ENCODE measurements at regions of chr1 and their contacts with region 1.

Region 1: DNA sequence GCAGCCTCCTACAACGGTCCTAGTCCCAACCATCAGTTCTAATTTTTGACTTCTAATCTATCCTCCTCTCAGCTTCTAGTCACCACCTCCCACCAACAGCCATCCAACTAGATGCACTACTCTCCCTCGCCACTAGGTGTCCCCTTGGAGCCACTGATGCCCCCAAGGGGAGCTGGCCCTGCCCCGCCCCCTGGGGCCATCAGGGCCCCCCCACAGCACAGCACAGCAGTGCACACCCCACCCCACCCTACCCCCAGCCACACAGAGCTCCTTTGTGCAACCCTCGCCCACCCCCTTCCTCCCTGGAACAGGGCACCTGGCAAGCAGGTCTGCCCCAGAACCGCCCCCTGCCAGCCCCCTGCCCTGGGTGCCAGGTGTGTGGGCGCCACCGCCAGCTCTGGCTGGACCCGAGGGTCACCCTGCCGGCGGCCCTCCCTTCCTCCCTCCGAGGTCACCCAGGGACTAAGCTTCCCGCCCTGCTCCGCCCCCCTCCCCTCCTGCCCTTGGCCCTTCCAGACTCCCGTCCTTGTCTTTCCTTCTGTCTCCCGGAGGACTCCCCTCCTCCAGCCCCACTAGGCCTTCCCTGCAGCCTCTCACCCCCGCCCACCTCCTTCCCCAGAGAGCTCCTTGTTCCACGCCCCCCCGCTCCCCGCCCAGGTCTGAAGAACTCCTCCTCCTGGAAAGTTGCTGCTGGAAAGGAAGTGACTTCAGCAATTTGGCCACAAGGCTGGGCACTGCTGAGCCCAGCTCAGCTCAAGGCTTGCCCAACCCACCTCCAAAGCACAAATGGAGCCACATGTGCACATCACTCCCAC is 47.0 kb downstream of the AHDC1 start:
- DNase-seq: peak; percentile 62
- ATAC-seq: peak; percentile 84
- H3K4me3 Mint-ChIP-seq: peak overlapping the region; percentile 36
- H3K27ac Mint-ChIP-seq: peak overlapping the region; percentile 26
- H3K4me1 Mint-ChIP-seq: peaks cover 38% of the 10 kb centered on the region
- H3K27me3 Mint-ChIP-seq: no peaks in the 10 kb centered on the region
- CTCF ChIP-seq: peak; percentile 26

Region 2: GRCh38 chr1:26993237-26994019 is 563.6 kb before region 1 on chr1 and contains the start of gene TRNP1:
- CTCF ChIA-PET with region 1: no interaction called
- POLR2A ChIA-PET with region 1: no interaction called
- intact Hi-C with region 1: no loop called
- DNase-seq: peak; percentile 68
- ATAC-seq: peak; percentile 71
- H3K4me3 Mint-ChIP-seq: peak within 1 kb of the TSS; percentile 81
- H3K27ac Mint-ChIP-seq: no peak within 1 kb of the TSS
- H3K4me1 Mint-ChIP-seq: peaks cover 20% of the 10 kb centered on the region
- H3K27me3 Mint-ChIP-seq: peaks cover 33% of the 10 kb centered on the region
- CTCF ChIP-seq: no peak
- total RNA-seq, gene TRNP1: 0.24 and 0.44 TPM in 2 replicates

Region 3: DNA sequence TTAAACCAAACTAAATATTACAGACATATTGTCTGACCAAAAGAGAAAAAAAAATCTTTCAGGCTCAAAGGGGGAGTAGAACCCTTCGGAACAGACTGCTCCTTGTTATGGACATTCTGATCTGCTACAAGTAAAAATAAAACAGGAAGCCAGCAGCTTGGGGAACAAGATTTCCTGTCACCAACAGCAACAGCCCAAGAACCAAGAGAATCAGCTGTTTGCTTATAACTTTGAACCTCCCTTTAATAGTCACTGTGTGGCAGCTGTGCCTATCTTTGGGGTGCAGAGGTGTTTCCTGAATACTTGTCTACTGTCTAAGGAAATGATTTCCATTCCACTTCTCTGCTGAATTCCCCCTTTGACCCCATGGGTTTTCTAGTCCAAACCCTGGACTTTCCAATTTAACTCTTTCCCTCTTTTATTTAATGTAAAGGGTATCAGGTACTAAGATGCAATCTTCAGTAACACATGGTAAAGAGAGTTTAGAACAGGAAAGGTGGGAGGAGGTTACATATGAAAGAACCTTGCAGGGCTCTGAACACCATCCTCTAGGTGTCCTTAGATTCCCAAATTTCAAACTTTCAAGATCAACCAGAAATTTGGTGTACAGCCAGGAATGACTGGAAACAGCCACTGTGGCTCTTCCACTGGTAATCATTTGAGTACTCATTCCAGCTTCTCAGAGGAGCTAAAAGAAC is 125.9 kb before region 1 on chr1:
- CTCF ChIA-PET with region 1: interaction called, 3 read pairs
- POLR2A ChIA-PET with region 1: interaction called, 11 read pairs
- intact Hi-C with region 1: no loop called
- DNase-seq: no peak
- ATAC-seq: peak; percentile 16
- H3K4me3 Mint-ChIP-seq: peak overlapping the region; percentile 57
- H3K27ac Mint-ChIP-seq: peak overlapping the region; percentile 85
- H3K4me1 Mint-ChIP-seq: peaks cover 95% of the 10 kb centered on the region
- H3K27me3 Mint-ChIP-seq: no peaks in the 10 kb centered on the region
- CTCF ChIP-seq: no peak

Region 4: DNA sequence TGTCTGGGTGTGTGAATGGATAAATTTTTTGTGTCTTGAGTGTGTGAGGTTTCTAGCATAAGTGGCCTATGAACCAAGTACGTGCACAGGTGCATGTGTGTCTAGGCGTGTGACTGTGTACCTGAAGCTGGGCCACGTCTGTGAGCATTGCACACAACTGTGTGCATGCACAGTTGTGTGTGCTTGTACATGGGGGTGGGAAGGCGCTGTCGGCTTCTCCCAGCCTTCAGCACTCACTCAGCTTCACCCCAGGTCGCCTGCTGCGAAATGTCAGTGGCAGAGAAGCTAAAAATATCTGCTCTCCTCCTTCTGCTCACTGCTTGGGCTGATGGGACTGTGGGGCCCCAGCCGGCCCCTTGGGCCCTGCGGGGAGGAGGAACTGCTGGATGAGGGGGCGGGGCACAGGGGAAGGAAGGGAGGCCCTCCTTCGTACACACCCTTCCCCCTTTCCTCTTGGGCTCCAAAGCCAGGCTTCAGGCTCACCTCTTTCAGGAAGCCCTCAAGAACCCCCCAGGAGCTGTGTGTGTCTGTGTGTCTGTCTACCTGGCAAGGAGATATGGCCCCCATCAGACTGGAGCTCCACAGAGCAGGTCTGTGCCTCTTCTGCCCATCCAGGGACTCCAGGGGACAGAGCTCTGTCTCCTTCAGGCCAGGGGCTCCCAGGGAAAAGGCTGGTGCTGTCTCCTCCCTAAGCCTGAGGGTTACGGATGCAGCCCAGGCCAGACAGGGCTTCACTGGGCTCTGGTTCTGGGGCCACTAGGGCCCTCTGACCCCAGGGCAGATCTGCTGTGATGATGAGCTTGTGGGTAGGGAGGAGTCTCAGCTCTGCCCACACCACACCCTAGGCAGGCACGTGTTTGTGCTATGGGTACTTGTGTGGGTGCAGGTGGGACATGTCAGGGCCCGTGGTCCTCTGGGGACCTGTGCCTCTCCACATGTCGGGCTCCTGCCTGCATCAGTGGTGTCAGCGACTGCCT is 31.4 kb before region 1 on chr1:
- CTCF ChIA-PET with region 1: interaction called, 7 read pairs
- POLR2A ChIA-PET with region 1: interaction called, 5 read pairs
- intact Hi-C with region 1: loop called (anchors 5 kb)
- DNase-seq: peak; percentile 51
- ATAC-seq: peak; percentile 64
- H3K4me3 Mint-ChIP-seq: peak overlapping the region; percentile 41
- H3K27ac Mint-ChIP-seq: peak overlapping the region; percentile 79
- H3K4me1 Mint-ChIP-seq: peaks cover 76% of the 10 kb centered on the region
- H3K27me3 Mint-ChIP-seq: no peaks in the 10 kb centered on the region
- CTCF ChIP-seq: no peak

Region 5: DNA sequence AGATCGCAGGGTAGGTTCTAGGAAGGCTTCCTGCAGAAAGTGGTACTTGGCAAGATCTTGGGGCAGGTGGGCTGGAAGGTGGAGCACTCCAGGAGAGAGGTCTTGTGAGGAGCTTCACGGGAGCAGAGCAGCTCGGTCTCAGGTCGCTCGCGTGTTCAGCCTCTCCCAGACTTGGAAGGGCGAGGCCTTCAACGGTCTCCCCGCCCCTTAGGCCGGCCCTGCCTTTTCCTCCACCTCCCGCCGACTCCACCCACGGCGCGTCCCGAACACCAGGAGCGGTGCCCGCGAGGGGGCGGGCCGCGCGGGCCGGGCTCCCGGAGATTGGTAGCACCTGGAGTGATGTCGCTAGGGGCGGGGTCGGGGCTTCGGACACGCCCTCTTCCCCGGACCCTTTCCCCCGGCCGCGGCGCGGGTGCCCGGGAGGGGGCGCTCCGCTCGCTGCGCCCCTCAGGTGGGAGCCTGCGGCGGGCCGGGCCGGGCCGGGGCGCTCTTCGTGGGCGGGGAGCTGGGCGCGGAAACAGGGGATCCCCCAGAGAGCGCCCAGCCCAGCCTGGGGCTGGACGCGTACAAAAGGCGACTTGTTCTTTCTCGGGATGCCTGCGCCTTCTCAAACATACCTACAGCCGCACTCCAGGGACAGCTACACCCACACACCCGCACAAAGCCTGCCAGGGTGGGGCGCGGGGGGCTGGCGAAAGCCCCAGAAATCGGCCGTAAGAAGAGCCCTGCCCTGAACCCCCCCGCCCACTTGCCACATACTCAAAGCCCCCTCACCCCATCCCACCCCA is 11.5 kb after region 1 on chr1:
- CTCF ChIA-PET with region 1: interaction called, 26 read pairs
- POLR2A ChIA-PET with region 1: interaction called, 26 read pairs
- intact Hi-C with region 1: loop called (anchors 1 kb)
- DNase-seq: peak; percentile 94
- ATAC-seq: peak; percentile 91
- H3K4me3 Mint-ChIP-seq: peak overlapping the region; percentile 73
- H3K27ac Mint-ChIP-seq: no peak overlapping the region
- H3K4me1 Mint-ChIP-seq: peaks cover 33% of the 10 kb centered on the region
- H3K27me3 Mint-ChIP-seq: no peaks in the 10 kb centered on the region
- CTCF ChIP-seq: no peak